MCF 10A (cell line): ENCODE measurements at regions of chr15 and their contacts with region 1.

Region 1: DNA sequence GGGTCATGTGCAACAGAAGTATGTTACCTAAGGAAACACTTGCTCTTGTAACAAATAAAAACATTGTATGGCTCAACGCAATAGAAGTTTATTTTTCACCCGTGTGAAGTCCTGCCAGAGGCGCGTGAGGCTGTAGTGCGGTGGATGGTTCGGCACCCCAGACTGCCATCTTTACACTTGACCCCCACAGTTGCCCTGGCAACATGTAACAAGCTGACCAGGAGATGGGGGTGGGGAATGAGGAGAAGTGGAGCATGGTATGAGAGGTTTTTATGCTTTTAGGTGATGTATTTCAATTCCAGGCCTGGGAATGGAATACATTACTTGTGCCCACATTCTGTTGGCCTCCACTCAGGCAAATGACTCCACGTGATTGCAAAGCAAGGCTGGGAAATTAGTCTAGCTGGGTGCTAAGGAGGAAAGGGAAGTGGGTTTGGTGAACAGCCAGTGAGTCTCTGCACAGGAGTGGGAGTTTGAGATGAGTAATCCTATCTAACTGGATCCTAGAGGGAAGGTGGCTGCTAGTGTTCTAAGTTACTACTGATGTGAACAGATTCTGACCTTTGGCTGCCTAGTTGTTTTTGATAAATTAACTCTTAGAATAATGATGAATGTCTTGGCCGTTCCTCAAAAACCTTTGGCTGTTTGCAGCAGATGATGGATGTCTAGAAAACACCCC is 33.8 kb upstream of the GREM1 start:
- DNase-seq: peak; percentile 94
- H3K4me3 Mint-ChIP-seq: no peak overlapping the region
- H3K27ac Mint-ChIP-seq: no peak overlapping the region
- H3K4me1 Mint-ChIP-seq: peaks cover 64% of the 10 kb centered on the region
- H3K27me3 Mint-ChIP-seq: no peaks in the 10 kb centered on the region
- CTCF ChIP-seq: no peak

Region 2: DNA sequence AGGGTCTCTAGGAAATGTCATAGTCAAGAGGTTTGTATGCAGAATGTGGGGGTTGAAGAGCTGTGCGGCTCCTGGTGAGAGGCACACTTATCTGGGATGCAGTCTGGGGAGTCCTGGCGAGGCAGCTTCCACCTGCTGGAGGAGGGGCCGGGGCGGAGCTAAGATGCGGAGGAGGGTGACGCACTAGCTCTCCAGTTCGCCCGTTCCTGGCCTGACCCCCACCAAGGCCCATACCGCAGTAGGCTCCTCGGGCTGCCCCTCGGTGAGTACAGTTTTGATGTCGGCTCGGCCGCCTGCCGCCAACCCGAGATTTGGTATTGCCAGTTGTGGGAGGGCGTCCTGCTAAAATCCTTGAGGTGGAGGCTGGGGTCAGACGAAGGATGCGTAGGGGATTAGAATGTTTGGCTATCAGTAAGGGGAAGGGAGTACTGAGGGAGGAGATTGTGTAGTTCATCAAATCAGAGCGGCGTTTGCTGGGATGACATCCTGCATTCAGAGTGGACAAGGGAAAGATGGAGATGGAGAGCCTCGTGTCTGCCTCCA is 42.5 kb before region 1 on chr15 and contains the start of gene SCG5:
- CTCF ChIA-PET with region 1: no interaction called
- POLR2A ChIA-PET with region 1: no interaction called
- intact Hi-C with region 1: no loop called
- DNase-seq: no peak
- H3K4me3 Mint-ChIP-seq: no peak within 1 kb of the TSS
- H3K27ac Mint-ChIP-seq: no peak within 1 kb of the TSS
- H3K4me1 Mint-ChIP-seq: no peaks in the 10 kb centered on the region
- H3K27me3 Mint-ChIP-seq: no peaks in the 10 kb centered on the region
- CTCF ChIP-seq: no peak
- total RNA-seq, gene SCG5: 4.0 and 7.4 TPM in 2 replicates

Region 3: GRCh38 chr15:32849769-32850668 is 166.0 kb after region 1 on chr15:
- CTCF ChIA-PET with region 1: interaction called, 8 read pairs
- POLR2A ChIA-PET with region 1: no interaction called
- intact Hi-C with region 1: loop called (anchors 1 kb)
- DNase-seq: peak; percentile 86
- H3K4me3 Mint-ChIP-seq: no peak overlapping the region
- H3K27ac Mint-ChIP-seq: peak overlapping the region; percentile 81
- H3K4me1 Mint-ChIP-seq: peaks cover 31% of the 10 kb centered on the region
- H3K27me3 Mint-ChIP-seq: no peaks in the 10 kb centered on the region
- CTCF ChIP-seq: no peak

Region 4: GRCh38 chr15:33159726-33160453 is 475.8 kb after region 1 on chr15:
- CTCF ChIA-PET with region 1: no interaction called
- POLR2A ChIA-PET with region 1: no interaction called
- intact Hi-C with region 1: no loop called
- DNase-seq: no peak
- H3K4me3 Mint-ChIP-seq: no peak overlapping the region
- H3K27ac Mint-ChIP-seq: no peak overlapping the region
- H3K4me1 Mint-ChIP-seq: peaks cover 2% of the 10 kb centered on the region
- H3K27me3 Mint-ChIP-seq: no peaks in the 10 kb centered on the region
- CTCF ChIP-seq: no peak